Uterus (tissue), 4 donors: ENCODE measurements at regions of chr2 and their contacts with region 1.

Region 1: GRCh38 chr2:222707689-222708525 is 36.4 kb downstream of the MOGAT1 start:
- DNase-seq: peak; percentile 72 to 76
- H3K4me3 ChIP-seq: no peak overlapping the region
- H3K27ac ChIP-seq: no peak overlapping the region
- H3K4me1 ChIP-seq: no peaks in the 10 kb centered on the region
- H3K27me3 ChIP-seq: peaks cover 0 to 5% of the 10 kb centered on the region in 2 donors
- CTCF ChIP-seq: peak; percentile 82 to 93 (median 88)
- POLR2A ChIP-seq: no peak

Region 2: GRCh38 chr2:222903234-222904220 is 195.6 kb after region 1 on chr2:
- intact Hi-C with region 1: loop called (anchors 10 kb)
- DNase-seq: peak in 1 of 2 donors; percentile 28
- H3K4me3 ChIP-seq: no peak overlapping the region
- H3K27ac ChIP-seq: no peak overlapping the region
- H3K4me1 ChIP-seq: peaks cover 0 to 4% of the 10 kb centered on the region in 2 donors
- H3K27me3 ChIP-seq: no peaks in the 10 kb centered on the region
- CTCF ChIP-seq: peak; percentile 45 to 71 (median 58)
- POLR2A ChIP-seq: no peak